Mammary epithelial cell (primary cell): ENCODE measurements at regions of chr13 and their contacts with region 1.

Region 1: DNA sequence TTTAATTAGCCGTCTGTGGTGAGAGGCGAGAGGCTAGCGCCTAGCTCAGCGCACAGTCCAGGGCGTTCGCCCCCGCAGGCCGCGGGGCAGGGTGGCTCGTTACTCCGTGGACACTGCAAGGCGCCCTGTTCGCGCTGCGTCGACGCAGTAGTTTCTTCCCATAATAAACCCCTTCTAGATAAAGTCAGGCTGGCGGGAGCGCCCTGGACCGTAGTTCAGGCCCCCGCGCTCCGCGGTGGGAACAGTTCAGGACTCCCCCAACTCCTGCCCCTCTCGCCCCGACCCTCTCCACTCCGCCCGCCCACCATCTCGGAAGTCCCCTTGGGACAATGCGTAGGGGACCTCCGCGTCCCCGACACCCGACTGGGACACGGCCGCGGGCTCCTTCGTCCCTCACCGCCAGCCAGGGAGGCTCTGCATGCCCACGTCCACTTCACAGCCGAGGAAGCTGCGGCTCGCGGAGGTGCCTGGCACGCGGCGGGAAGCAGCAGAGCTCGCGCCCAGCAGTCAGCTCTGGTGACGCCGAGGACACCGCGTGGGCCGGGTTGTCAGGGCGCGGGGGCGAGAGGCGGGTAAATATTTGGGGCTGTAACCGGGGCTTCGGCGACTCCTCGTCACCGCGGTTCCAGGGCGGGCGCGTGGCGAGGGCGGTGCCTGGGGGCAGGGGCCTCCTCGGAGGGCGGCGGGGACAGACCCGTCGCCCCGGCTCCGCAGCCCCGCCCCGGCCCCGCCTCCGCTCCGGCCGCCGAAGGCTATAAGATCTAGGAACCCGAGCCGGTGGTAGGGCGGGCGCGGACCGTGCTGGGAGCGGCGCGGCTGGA is at the start of gene RGCC:
- DNase-seq: peak; percentile 60
- H3K4me3 ChIP-seq: peak within 1 kb of the TSS; percentile 55 to 64 (median 58)
- H3K27ac ChIP-seq: no peak within 1 kb of the TSS
- H3K4me1 ChIP-seq: peaks cover 26% of the 10 kb centered on the region
- H3K27me3 ChIP-seq: no peaks in the 10 kb centered on the region
- CTCF ChIP-seq: no peak
- total RNA-seq, gene RGCC: 1.4 to 8.0 TPM

Region 2: GRCh38 chr13:41434831-41435520 is 22.0 kb before region 1 on chr13:
- CTCF ChIA-PET with region 1: no interaction called
- dilution Hi-C with region 1: no loop called
- in situ Hi-C with region 1: no loop called
- intact Hi-C with region 1: no loop called
- DNase-seq: no peak
- H3K4me3 ChIP-seq: no peak overlapping the region
- H3K27ac ChIP-seq: no peak overlapping the region
- H3K4me1 ChIP-seq: no peaks in the 10 kb centered on the region
- H3K27me3 ChIP-seq: peaks cover 2% of the 10 kb centered on the region
- CTCF ChIP-seq: no peak

Region 3: GRCh38 chr13:41562083-41562482 is 105.1 kb after region 1 on chr13:
- CTCF ChIA-PET with region 1: no interaction called
- dilution Hi-C with region 1: no loop called
- in situ Hi-C with region 1: no loop called
- intact Hi-C with region 1: loop called (anchors 5 kb)
- DNase-seq: peak; percentile 71
- H3K4me3 ChIP-seq: no peak overlapping the region
- H3K27ac ChIP-seq: no peak overlapping the region
- H3K4me1 ChIP-seq: peaks cover 26% of the 10 kb centered on the region
- H3K27me3 ChIP-seq: no peaks in the 10 kb centered on the region
- CTCF ChIP-seq: no peak

Region 4: GRCh38 chr13:41613984-41614661 is 157.1 kb after region 1 on chr13:
- CTCF ChIA-PET with region 1: no interaction called
- dilution Hi-C with region 1: no loop called
- in situ Hi-C with region 1: no loop called
- intact Hi-C with region 1: loop called (anchors 10 kb)
- DNase-seq: peak; percentile 51
- H3K4me3 ChIP-seq: no peak overlapping the region
- H3K27ac ChIP-seq: peak overlapping the region; percentile 40
- H3K4me1 ChIP-seq: peaks cover 46% of the 10 kb centered on the region
- H3K27me3 ChIP-seq: no peaks in the 10 kb centered on the region
- CTCF ChIP-seq: no peak